HepG2 (cell line): ENCODE measurements at regions of chr4 and their contacts with region 1.

Region 1: GRCh38 chr4:46844325-46844917 is 64.6 kb downstream of the COX7B2 start:
- DNase-seq: peak; percentile 50
- ATAC-seq: peak; percentile 60
- H3K4me3 ChIP-seq: no peak overlapping the region
- H3K27ac ChIP-seq: no peak overlapping the region
- H3K4me1 ChIP-seq: no peaks in the 10 kb centered on the region
- H3K27me3 ChIP-seq: no peaks in the 10 kb centered on the region
- CTCF ChIP-seq: peak; percentile 71
- EP300 ChIP-seq: no peak
- POLR2A ChIP-seq: no peak
- RAD21 ChIP-seq: peak; percentile 44; the same call in 1 of the 2 replicates

Region 2: DNA sequence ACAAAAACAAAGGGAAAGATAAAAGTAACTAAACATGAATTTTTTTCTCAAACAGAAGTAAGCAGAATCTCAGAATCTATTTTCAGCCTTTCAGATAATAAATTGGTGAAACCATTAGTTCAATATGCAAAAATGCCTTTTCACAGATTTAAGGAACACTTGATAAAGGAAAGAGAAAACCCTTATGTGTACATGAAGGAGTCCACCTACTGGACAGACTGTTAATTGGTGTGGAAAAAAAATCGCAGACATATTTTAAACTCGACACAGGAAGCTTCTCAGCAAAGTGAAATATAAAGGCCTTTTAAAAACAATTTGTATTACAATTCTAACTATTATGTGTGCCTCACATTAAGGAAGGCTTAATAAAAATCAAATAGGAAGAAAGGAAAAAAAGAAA is 42.3 kb after region 1 on chr4:
- CTCF ChIA-PET with region 1: no interaction called
- POLR2A ChIA-PET with region 1: no interaction called
- in situ Hi-C with region 1: no loop called
- intact Hi-C with region 1: loop called (anchors 2 kb)
- DNase-seq: peak; percentile 1
- ATAC-seq: peak; percentile 52; the same call in 2 of the 3 replicates
- H3K4me3 ChIP-seq: no peak overlapping the region
- H3K27ac ChIP-seq: no peak overlapping the region
- H3K4me1 ChIP-seq: peaks cover 11% of the 10 kb centered on the region
- H3K27me3 ChIP-seq: no peaks in the 10 kb centered on the region
- CTCF ChIP-seq: peak; percentile 21; the same call in 1 of the 2 replicates
- EP300 ChIP-seq: no peak
- POLR2A ChIP-seq: no peak
- RAD21 ChIP-seq: no peak

Region 3: GRCh38 chr4:47122592-47123291 is 278.3 kb after region 1 on chr4:
- CTCF ChIA-PET with region 1: no interaction called
- POLR2A ChIA-PET with region 1: no interaction called
- in situ Hi-C with region 1: no loop called
- intact Hi-C with region 1: loop called (anchors 1 kb)
- DNase-seq: peak; percentile 63
- ATAC-seq: peak; percentile 93
- H3K4me3 ChIP-seq: no peak overlapping the region
- H3K27ac ChIP-seq: no peak overlapping the region
- H3K4me1 ChIP-seq: no peaks in the 10 kb centered on the region
- H3K27me3 ChIP-seq: no peaks in the 10 kb centered on the region
- CTCF ChIP-seq: peak; percentile 81
- EP300 ChIP-seq: no peak
- POLR2A ChIP-seq: no peak
- RAD21 ChIP-seq: no peak